Naive thymus-derived CD4-positive, alpha-beta T cell (primary cell): ENCODE measurements at regions of chr3 and their contacts with region 1.

Region 1: DNA sequence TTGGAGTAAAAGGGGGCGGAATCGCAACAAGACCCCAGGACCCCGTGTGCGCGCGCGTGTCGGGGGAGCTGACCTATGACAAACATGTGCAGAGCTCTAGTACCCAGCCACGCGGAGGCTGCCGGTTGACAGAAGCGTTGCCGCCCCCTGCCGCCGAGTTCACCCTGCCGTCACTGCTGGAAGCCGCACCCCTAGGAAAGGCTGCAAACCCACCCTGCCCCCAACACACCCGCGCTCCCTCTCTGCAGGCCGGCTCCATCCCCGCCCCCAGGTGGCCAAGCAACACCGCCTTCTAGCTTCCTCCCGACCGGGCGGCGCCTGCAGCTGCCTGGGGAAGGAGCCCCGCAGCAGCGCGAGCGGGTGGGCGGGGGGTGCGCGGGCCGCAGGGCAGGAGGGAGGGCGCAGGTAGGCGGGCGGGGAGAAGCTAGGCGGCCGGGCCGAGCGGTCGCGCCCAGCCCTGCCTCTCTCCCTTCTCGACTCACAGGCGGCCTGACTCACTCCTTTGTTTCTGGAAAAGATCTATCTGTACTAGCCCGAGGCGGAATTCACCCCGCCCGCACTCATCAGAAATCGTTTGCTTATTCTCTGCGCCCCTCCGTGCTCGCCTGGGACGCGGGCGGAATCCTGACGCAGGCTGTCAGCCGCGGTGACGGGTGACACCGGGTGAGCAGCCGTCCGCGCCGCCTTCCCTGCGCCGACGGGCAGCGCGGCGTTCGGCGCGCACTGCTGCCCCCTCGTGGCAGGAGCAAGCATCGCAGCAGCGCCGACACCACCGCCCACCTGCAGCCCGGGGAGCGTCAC is 160.8 kb downstream of the GAP43 start:
- DNase-seq: peak; percentile 88 to 94 (median 92)
- ATAC-seq: peak; percentile 92
- H3K4me3 ChIP-seq: peak overlapping the region; percentile 54
- H3K4me3 Mint-ChIP-seq: peak overlapping the region; percentile 80 to 97 (median 91)
- H3K27ac ChIP-seq: peak overlapping the region; percentile 99
- H3K27ac Mint-ChIP-seq: peak overlapping the region; percentile 79 to 99 (median 98)
- H3K4me1 ChIP-seq: peaks cover 3% of the 10 kb centered on the region in 2 donors
- H3K4me1 Mint-ChIP-seq: peaks cover 8 to 16% (median 14%) of the 10 kb centered on the region in 7 donors
- H3K27me3 ChIP-seq: no peaks in the 10 kb centered on the region
- H3K27me3 Mint-ChIP-seq: peaks cover 0 to 25% (median under 1%) of the 10 kb centered on the region in 5 donors

Region 2: GRCh38 chr3:113947372-113948014 is 1836.6 kb before region 1 on chr3 and contains the start of gene ZDHHC23:
- CTCF ChIA-PET with region 1: no interaction called
- POLR2A ChIA-PET with region 1: no interaction called
- intact Hi-C with region 1: loop called in 1 of 2 experiments (anchors 5 kb)
- DNase-seq: peak; percentile 55 to 82 (median 69)
- ATAC-seq: peak; percentile 92
- H3K4me3 ChIP-seq: peak within 1 kb of the TSS; percentile 62
- H3K4me3 Mint-ChIP-seq: peak within 1 kb of the TSS; percentile 79 to 94 (median 86)
- H3K27ac ChIP-seq: peak within 1 kb of the TSS; percentile 42
- H3K27ac Mint-ChIP-seq: peak within 1 kb of the TSS in 7 of 9 donors; percentile 33 to 81 (median 59)
- H3K4me1 ChIP-seq: peaks cover 0 to 8% of the 10 kb centered on the region in 2 donors
- H3K4me1 Mint-ChIP-seq: peaks cover 8 to 20% (median 13%) of the 10 kb centered on the region in 7 donors
- H3K27me3 ChIP-seq: no peaks in the 10 kb centered on the region
- H3K27me3 Mint-ChIP-seq: peaks cover 9 to 60% (median 14%) of the 10 kb centered on the region in 5 donors
- total RNA-seq, gene ZDHHC23: 2.1 to 3.4 (median 3.2) TPM

Region 3: GRCh38 chr3:114827495-114827894 is 956.6 kb before region 1 on chr3:
- CTCF ChIA-PET with region 1: no interaction called
- POLR2A ChIA-PET with region 1: no interaction called
- intact Hi-C with region 1: loop called (anchors 1 to 10 kb)
- DNase-seq: peak in 2 of 9 donors; percentile 11 to 18
- ATAC-seq: peak; percentile 50
- H3K4me3 ChIP-seq: no peak overlapping the region
- H3K4me3 Mint-ChIP-seq: no peak overlapping the region
- H3K27ac ChIP-seq: no peak overlapping the region
- H3K27ac Mint-ChIP-seq: no peak overlapping the region
- H3K4me1 ChIP-seq: no peaks in the 10 kb centered on the region
- H3K4me1 Mint-ChIP-seq: peaks cover 0 to 11% (median 4%) of the 10 kb centered on the region in 7 donors
- H3K27me3 ChIP-seq: no peaks in the 10 kb centered on the region
- H3K27me3 Mint-ChIP-seq: no peaks in the 10 kb centered on the region

Region 4: GRCh38 chr3:115092220-115092791 is 691.8 kb before region 1 on chr3:
- CTCF ChIA-PET with region 1: no interaction called
- POLR2A ChIA-PET with region 1: no interaction called
- intact Hi-C with region 1: loop called (anchors 1 kb)
- DNase-seq: peak; percentile 24 to 62 (median 44)
- ATAC-seq: peak; percentile 76
- H3K4me3 ChIP-seq: no peak overlapping the region
- H3K4me3 Mint-ChIP-seq: no peak overlapping the region
- H3K27ac ChIP-seq: no peak overlapping the region
- H3K27ac Mint-ChIP-seq: peak overlapping the region in 5 of 9 donors; percentile 6 to 46 (median 32)
- H3K4me1 ChIP-seq: peaks cover 0 to 9% of the 10 kb centered on the region in 2 donors
- H3K4me1 Mint-ChIP-seq: peaks cover 3 to 73% (median 44%) of the 10 kb centered on the region in 7 donors
- H3K27me3 ChIP-seq: no peaks in the 10 kb centered on the region
- H3K27me3 Mint-ChIP-seq: no peaks in the 10 kb centered on the region

Region 5: GRCh38 chr3:115217678-115218451 is 566.3 kb before region 1 on chr3:
- CTCF ChIA-PET with region 1: interaction called, 4 read pairs
- POLR2A ChIA-PET with region 1: no interaction called
- intact Hi-C with region 1: loop called (anchors 1 to 5 kb)
- DNase-seq: peak in 5 of 9 donors; percentile 1 to 19 (median 3)
- ATAC-seq: peak; percentile 52
- H3K4me3 ChIP-seq: no peak overlapping the region
- H3K4me3 Mint-ChIP-seq: no peak overlapping the region
- H3K27ac ChIP-seq: no peak overlapping the region
- H3K27ac Mint-ChIP-seq: no peak overlapping the region
- H3K4me1 ChIP-seq: no peaks in the 10 kb centered on the region
- H3K4me1 Mint-ChIP-seq: no peaks in the 10 kb centered on the region
- H3K27me3 ChIP-seq: no peaks in the 10 kb centered on the region
- H3K27me3 Mint-ChIP-seq: peaks cover 0 to 17% (median 4%) of the 10 kb centered on the region in 5 donors

Region 6: GRCh38 chr3:115658337-115659181 is 125.6 kb before region 1 on chr3:
- CTCF ChIA-PET with region 1: no interaction called
- POLR2A ChIA-PET with region 1: interaction called, 5 read pairs
- intact Hi-C with region 1: loop called (anchors 1 kb)
- DNase-seq: peak; percentile 49 to 76 (median 62)
- ATAC-seq: peak; percentile 92
- H3K4me3 ChIP-seq: peak overlapping the region; percentile 51
- H3K4me3 Mint-ChIP-seq: peak overlapping the region; percentile 81 to 99 (median 95)
- H3K27ac ChIP-seq: peak overlapping the region; percentile 60
- H3K27ac Mint-ChIP-seq: peak overlapping the region; percentile 90 to 100 (median 98)
- H3K4me1 ChIP-seq: peaks cover 5 to 13% of the 10 kb centered on the region in 2 donors
- H3K4me1 Mint-ChIP-seq: peaks cover 14 to 31% (median 24%) of the 10 kb centered on the region in 7 donors
- H3K27me3 ChIP-seq: no peaks in the 10 kb centered on the region
- H3K27me3 Mint-ChIP-seq: peaks cover 0 to 13% (median 0%) of the 10 kb centered on the region in 5 donors

Region 7: DNA sequence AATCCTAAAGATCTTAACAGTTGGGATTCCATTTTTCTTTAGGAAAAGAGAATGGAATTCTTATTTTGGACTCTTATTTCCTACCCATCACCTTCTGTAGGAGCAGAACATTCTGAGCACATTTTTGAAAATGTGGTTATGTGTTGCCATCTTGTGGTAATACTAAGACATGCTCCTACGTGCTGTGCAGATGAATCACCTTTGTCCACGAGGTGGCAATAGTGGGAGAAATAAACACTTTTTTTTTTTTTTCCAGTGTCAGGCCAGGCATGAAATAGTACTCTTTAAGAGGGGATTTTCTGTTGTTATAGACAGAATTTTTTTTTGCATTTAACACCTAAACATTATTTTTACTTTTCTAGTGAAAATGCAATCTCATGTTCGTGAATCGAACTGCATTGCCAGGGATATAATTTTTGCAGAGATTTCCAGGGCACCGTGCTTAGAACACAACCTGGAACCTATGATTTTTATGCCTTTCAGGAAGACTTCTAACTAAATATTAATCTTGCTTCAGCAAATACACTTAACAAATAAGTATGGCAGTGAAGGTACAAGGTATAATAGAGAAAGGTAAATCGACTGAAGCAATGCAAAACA is 35.7 kb after region 1 on chr3:
- CTCF ChIA-PET with region 1: interaction called, 5 read pairs
- POLR2A ChIA-PET with region 1: interaction called, 4 read pairs
- intact Hi-C with region 1: loop called (anchors 1 kb)
- DNase-seq: peak in 8 of 9 donors; percentile 26 to 67 (median 62)
- ATAC-seq: peak; percentile 97
- H3K4me3 ChIP-seq: no peak overlapping the region
- H3K4me3 Mint-ChIP-seq: no peak overlapping the region
- H3K27ac ChIP-seq: no peak overlapping the region
- H3K27ac Mint-ChIP-seq: no peak overlapping the region
- H3K4me1 ChIP-seq: no peaks in the 10 kb centered on the region
- H3K4me1 Mint-ChIP-seq: peaks cover 0 to 2% (median 0%) of the 10 kb centered on the region in 7 donors
- H3K27me3 ChIP-seq: no peaks in the 10 kb centered on the region
- H3K27me3 Mint-ChIP-seq: peaks cover 0 to 9% (median 0%) of the 10 kb centered on the region in 5 donors

Region 8: DNA sequence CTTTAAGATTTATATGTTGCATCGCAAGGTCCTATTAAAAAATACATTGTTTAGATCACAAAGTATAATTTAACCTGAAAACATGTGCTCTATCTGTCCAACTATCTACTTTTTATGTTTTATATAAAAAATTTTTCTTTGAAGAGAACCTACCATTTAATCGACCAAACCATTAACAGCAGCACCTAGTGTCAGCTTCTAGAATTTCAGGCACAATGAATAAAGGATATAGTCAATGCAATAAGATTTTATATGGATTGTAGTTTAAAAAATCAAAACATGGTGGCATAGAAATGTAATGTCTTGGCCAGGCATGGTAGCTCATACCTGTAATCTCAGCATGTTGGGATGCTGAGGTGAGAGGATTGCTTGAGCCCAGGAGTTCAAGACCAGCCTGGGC is 152.9 kb after region 1 on chr3:
- CTCF ChIA-PET with region 1: no interaction called
- POLR2A ChIA-PET with region 1: no interaction called
- intact Hi-C with region 1: no loop called
- DNase-seq: no peak
- ATAC-seq: no peak
- H3K4me3 ChIP-seq: no peak overlapping the region
- H3K4me3 Mint-ChIP-seq: no peak overlapping the region
- H3K27ac ChIP-seq: no peak overlapping the region
- H3K27ac Mint-ChIP-seq: no peak overlapping the region
- H3K4me1 ChIP-seq: no peaks in the 10 kb centered on the region
- H3K4me1 Mint-ChIP-seq: no peaks in the 10 kb centered on the region
- H3K27me3 ChIP-seq: no peaks in the 10 kb centered on the region
- H3K27me3 Mint-ChIP-seq: peaks cover 0 to 8% (median 2%) of the 10 kb centered on the region in 5 donors